WTC11 (cell line): ENCODE measurements at regions of chr14 and their contacts with region 1.

Region 1: DNA sequence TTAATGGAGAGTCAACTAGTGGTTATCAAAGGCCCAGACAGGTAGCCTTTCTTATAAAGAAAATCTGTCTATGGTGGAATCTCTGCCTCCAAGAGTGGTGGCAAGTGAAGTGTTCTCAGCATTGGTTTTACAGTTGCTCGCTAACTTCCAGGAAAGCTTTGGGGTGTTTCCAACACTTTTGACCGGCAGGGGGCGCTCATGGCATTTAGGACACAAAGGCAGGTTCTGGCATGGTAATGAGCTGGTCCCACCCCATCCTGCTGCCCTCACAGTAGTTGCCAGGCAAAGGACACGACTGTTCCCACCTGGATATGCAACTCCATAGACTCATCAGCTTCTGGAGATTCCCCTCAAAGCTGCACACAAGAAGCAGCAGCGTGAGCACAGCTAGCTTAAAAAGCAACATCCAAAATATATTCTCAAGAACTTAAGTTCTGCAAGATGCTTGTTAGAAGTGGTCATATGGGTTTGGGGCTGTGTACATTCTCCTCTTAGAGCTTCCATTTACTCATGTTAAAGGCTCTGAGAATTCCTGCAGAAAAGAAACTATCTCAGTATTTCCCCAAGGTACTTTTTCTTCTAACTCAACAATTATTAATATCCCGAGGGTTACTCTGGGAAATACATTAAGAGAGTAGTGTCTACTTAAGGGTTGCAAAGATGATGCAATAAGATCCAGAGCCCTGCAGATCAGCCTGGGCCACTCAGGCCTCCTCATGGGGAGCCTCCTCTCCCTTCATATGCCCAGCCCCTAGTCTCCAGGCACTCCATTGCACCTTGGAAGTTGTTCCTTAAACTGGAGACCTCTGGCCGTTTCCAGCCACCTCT is 14.8 kb downstream of the PROX2 start:
- DNase-seq: peak; percentile 95
- ATAC-seq: peak; percentile 95
- H3K4me3 Mint-ChIP-seq: no peak overlapping the region
- H3K27ac Mint-ChIP-seq: no peak overlapping the region
- H3K4me1 Mint-ChIP-seq: peaks cover 3% of the 10 kb centered on the region; the same call in 1 of the 2 replicates
- H3K27me3 Mint-ChIP-seq: no peaks in the 10 kb centered on the region; the same call in none of the 2 replicates
- CTCF ChIP-seq: peak; percentile 77

Region 2: DNA sequence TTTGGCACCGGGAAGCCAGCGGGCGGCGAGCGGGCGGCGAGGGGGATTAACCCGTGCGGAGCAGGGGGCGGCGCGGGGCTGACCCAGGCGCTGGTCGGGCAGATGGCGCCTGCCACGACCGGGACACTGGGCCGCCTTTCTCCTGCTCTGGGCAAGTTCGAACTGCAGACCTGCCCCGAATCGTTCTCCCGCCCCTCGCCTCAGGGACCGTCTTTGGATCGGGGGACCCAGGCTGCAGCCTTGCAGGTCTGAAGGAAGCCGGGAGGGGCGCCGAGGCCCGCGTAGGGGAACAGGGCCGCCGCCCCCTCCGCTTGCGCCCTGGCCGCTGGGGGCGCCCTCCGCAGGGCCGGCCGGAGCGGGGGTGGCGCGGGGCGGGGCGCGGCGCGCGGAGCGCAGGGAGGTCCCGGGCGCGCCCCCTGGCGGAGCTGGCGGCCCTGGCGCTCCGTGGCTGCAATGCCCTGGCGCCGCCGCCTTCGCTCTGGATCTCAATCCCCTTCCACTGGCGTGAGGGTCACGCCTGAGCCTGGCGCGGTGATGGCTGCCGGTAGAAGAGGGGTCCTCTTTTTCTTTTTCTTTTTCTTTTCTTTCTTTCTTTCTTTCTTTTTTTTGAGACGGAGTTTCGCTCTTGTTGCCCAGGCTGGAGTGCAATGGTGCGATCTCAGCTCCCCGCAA is 248.6 kb before region 1 on chr14:
- CTCF ChIA-PET with region 1: interaction called, 18 read pairs
- POLR2A ChIA-PET with region 1: no interaction called
- DNase-seq: peak; percentile 88
- ATAC-seq: peak; percentile 84
- H3K4me3 Mint-ChIP-seq: peak overlapping the region; percentile 76
- H3K27ac Mint-ChIP-seq: no peak overlapping the region
- H3K4me1 Mint-ChIP-seq: peaks cover 21% of the 10 kb centered on the region
- H3K27me3 Mint-ChIP-seq: peaks cover 68% of the 10 kb centered on the region
- CTCF ChIP-seq: peak; percentile 40

Region 3: GRCh38 chr14:74841230-74842207 is 19.6 kb before region 1 on chr14:
- CTCF ChIA-PET with region 1: interaction called, 11 read pairs
- POLR2A ChIA-PET with region 1: no interaction called
- DNase-seq: no peak
- ATAC-seq: no peak
- H3K4me3 Mint-ChIP-seq: no peak overlapping the region
- H3K27ac Mint-ChIP-seq: no peak overlapping the region
- H3K4me1 Mint-ChIP-seq: 0 out of 2 replicates have a peak, but pooled peaks cover 5% of the 10 kb centered on the region
- H3K27me3 Mint-ChIP-seq: no peaks in the 10 kb centered on the region
- CTCF ChIP-seq: no peak

Region 4: DNA sequence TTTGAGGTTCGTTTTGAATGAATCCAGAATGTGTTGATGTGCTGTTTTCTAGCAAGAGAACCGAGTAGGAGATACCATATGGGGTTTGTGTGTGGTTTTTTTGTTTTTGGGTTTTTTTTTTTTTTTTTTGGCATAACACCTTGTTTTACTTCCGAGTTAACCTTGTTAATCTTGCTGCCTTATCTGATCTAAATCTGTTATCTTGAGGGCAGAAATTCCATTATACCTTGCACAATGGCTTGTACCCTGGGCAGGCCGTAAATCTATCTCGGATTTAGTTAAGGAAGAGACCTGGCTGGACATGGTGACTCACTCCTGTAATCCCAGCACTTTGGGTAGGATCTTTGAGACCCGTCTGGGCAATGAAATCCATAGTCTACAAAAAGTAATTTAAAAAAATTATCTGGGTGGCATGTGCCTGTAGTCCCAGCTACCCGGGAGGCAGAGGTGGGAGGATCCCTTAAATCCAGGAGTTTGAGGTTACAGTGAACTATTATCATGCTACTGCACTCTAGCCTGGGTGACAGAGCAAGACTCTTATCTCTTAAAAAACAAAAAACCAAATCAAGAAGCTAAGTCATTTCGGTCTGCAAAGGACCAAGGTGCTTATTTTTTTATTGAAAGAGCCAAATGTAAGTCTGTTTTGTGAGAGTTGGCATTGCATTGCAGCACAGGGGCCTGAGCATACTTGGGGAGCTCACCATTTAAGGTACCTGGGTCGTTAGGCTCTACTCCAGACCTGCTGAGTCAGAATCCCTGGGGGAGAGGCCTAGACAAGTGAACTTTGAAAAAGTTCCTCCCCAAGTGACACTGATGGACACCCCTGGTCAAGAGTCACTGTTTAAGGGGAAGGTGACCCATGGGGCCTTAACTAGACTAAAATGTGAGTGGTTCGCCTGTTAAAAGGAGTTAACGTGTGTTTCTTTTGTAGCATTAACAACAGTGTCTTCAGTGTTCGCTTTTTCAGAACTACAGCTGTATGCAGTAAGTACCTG is 27.3 kb after region 1 on chr14:
- CTCF ChIA-PET with region 1: interaction called, 133 read pairs
- POLR2A ChIA-PET with region 1: interaction called, 3 read pairs
- DNase-seq: no peak
- ATAC-seq: no peak
- H3K4me3 Mint-ChIP-seq: no peak overlapping the region
- H3K27ac Mint-ChIP-seq: peak overlapping the region; percentile 96
- H3K4me1 Mint-ChIP-seq: peaks cover 49% of the 10 kb centered on the region
- H3K27me3 Mint-ChIP-seq: no peaks in the 10 kb centered on the region
- CTCF ChIP-seq: no peak

Region 5: DNA sequence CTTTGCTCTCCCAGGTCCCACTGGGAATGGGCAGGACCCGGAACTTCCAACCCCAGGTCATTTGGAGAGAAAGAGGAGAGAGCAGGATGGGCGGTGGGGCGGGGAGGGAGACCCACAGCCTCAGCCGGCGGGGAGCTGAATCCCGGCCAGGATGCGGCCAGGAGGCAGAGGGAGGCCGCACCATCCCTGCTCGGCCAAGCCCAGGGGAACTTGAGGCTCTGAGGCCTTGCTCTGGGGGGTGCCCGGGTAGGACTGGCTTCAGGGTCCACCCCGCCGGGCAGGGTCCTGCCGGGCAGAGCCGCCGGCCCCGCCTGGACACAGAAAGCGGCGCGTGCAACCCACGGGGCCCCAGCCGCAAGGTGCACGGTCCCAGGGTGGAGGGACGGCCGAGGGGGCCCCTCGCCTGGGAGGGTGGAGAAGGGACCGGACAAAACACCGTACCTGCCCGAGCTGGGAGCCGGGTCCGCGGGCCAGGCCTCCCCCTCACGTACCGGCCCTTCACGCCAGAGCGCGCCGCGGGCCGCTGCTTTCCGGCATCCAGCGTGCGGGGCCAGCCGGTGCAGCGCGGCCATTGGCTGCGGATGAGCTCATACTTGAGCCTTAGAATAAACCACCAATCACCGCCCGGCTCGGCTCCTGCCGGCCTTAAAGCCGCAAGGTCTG is 61.8 kb after region 1 on chr14 and contains the start of gene RPS6KL1:
- CTCF ChIA-PET with region 1: interaction called, 29 read pairs
- POLR2A ChIA-PET with region 1: no interaction called
- DNase-seq: peak; percentile 89
- ATAC-seq: peak; percentile 98
- H3K4me3 Mint-ChIP-seq: peak within 1 kb of the TSS; percentile 87
- H3K27ac Mint-ChIP-seq: no peak within 1 kb of the TSS
- H3K4me1 Mint-ChIP-seq: 0 out of 2 replicates have a peak, but pooled peaks cover 3% of the 10 kb centered on the region
- H3K27me3 Mint-ChIP-seq: peaks cover 3% of the 10 kb centered on the region; the same call in 1 of the 2 replicates
- CTCF ChIP-seq: no peak
- total RNA-seq, gene RPS6KL1: 10.6 to 12.6 TPM (median 12.2 TPM) in 3 replicates

Region 6: GRCh38 chr14:75063407-75064213 is 202.5 kb after region 1 on chr14 and contains the start of gene ACYP1:
- CTCF ChIA-PET with region 1: interaction called, 14 read pairs
- POLR2A ChIA-PET with region 1: no interaction called
- DNase-seq: peak; percentile 97
- ATAC-seq: peak; percentile 98
- H3K4me3 Mint-ChIP-seq: peak within 1 kb of the TSS; percentile 96
- H3K27ac Mint-ChIP-seq: peak within 1 kb of the TSS; percentile 79
- H3K4me1 Mint-ChIP-seq: peaks cover 14% of the 10 kb centered on the region
- H3K27me3 Mint-ChIP-seq: no peaks in the 10 kb centered on the region
- CTCF ChIP-seq: no peak
- total RNA-seq, gene ACYP1: 22.4 to 26.6 TPM (median 23.0 TPM) in 3 replicates